HepG2 (cell line): ENCODE measurements at regions of chr4 and their contacts with region 1.

Region 1: DNA sequence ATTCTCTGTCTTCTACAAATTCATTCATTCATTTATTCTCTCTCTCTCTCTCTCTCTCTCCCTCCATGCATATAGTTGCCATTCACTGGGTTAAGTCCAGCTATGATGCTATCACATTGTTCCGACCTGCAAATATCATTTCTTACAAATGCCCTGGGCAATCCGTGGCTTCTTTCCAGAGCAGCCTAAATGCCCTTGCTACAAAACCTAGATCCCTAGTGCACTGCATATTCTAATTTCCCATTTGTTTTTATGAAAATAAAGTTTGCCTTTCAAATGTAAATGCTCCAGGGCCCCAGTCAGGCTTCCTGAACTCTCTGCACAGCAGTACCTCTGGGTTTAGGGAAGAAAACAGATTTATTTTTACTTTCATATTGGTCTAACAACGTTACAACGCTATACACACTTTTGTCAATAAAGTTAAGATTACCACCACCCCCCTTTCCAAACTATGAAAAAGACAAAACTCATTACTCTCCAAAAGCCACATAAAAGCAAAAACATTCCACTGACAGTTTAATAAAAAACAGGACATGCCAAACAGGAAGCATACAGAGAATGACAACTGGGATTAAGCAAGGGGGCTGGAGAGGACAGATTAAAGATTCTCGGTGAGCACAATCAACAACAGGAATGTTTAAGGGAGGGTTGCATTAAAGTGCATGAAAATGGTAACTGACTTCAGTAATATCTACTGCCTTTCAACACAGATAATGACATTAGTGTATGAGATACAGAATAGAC is 104.3 kb downstream of the USP46 start:
- DNase-seq: no peak
- ATAC-seq: no peak
- H3K4me3 ChIP-seq: no peak overlapping the region
- H3K27ac ChIP-seq: no peak overlapping the region
- H3K4me1 ChIP-seq: no peaks in the 10 kb centered on the region
- H3K27me3 ChIP-seq: no peaks in the 10 kb centered on the region; a peak in 2 of 5 replicates
- CTCF ChIP-seq: no peak
- EP300 ChIP-seq: no peak
- POLR2A ChIP-seq: no peak
- RAD21 ChIP-seq: no peak

Region 2: GRCh38 chr4:52837726-52838558 is 283.2 kb after region 1 on chr4:
- CTCF ChIA-PET with region 1: no interaction called
- POLR2A ChIA-PET with region 1: no interaction called
- in situ Hi-C with region 1: no loop called
- intact Hi-C with region 1: loop called (anchors 5 kb)
- DNase-seq: peak; percentile 31
- ATAC-seq: peak; percentile 90
- H3K4me3 ChIP-seq: no peak overlapping the region
- H3K27ac ChIP-seq: no peak overlapping the region
- H3K4me1 ChIP-seq: peaks cover 19% of the 10 kb centered on the region
- H3K27me3 ChIP-seq: no peaks in the 10 kb centered on the region; a peak in 2 of 5 replicates
- CTCF ChIP-seq: no peak
- EP300 ChIP-seq: no peak
- POLR2A ChIP-seq: no peak
- RAD21 ChIP-seq: no peak